Testis (tissue), 5 donors: ENCODE measurements at regions of chr19 and their contacts with region 1.

Region 1: DNA sequence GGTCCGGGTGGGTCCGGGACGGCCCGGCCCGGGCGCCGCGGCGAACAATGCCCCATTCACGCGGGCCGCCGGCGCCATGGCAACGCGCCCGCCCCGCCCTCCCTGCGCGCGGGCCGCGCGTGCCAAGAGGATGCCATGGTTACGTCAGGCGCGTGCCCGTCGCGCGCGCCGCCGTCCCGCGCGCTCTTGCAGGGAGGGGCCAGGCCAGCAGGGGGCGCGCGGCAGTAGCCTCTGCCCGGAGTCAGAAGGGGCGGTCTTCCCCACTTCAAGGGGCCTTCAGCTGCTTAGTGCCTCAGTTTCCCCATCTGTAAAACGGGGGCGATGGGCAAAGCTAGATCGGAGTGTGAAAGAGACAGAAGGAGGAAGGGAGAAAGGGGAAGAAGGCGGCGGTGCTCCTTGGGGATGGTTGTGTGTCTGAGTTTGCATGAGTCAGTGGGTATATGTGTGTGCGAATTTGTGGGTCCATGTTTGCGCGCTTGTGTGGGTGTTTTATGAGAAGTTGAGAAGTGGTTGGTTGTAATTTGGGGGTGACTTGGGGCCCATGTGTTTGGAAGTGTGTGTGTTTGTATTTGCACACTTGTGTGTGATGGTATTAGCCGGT is 11.6 kb upstream of the NFIX start:
- DNase-seq: peak; percentile 89
- H3K4me3 ChIP-seq: peak overlapping the region; percentile 38 to 42
- H3K27ac ChIP-seq: no peak overlapping the region
- H3K4me1 ChIP-seq: no peaks in the 10 kb centered on the region
- H3K27me3 ChIP-seq: no peaks in the 10 kb centered on the region
- CTCF ChIP-seq: peak; percentile 94 to 99 (median 99)
- POLR2A ChIP-seq: no peak

Region 2: DNA sequence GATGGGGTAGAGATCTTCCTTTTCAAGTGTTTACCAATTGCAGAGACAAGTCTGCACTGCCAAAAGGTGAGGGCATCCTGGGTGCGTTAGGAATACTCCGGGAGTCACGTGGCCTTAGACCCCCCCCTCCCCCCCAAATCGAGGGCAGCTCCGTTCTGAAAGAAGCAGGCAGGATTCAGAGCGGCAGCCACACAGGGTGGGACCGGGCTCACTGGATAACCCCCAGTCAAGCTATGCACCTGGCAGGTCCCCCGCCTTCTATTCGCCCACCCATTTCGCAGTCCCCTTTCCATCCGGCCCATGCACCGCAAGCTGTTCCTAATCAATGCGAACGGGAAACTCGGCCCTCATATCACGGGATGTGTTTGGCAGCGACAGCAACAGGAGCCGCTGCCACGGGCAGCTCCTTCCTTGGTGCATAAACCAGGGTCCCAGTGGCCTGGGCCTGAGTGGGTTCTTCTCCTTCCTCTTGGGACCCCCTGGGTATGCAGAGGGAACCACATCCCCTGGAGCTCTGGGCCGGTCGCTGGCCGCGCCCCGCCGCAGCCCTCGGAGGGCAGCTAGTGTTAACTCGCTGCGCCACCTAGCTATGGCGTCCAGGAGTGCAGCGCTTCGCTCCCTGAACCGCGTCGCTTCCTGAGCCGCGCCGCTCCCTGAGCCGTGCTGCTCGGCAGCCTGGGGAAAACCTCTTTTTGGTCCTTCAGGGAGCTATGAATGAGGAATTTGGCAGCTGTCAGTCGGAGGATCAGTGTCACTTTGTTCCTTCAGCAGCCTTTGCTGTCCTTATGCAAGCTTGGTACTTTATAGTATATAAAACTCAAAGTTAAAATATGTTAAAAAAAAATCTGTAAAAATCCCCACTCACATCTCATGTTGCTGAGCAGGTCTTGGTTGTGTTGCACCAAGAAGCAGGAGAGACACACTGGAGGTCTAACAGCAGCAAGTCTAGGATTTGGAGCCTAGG is 77.6 kb after region 1 on chr19:
- intact Hi-C with region 1: loop called (anchors 5 kb)
- DNase-seq: peak; percentile 92
- H3K4me3 ChIP-seq: peak overlapping the region; percentile 15 to 57
- H3K27ac ChIP-seq: peak overlapping the region; percentile 63 to 81
- H3K4me1 ChIP-seq: peaks cover 85% of the 10 kb centered on the region
- H3K27me3 ChIP-seq: no peaks in the 10 kb centered on the region
- CTCF ChIP-seq: peak; percentile 90 to 97 (median 92)
- POLR2A ChIP-seq: no peak

Region 3: GRCh38 chr19:13093407-13094105 is 109.9 kb after region 1 on chr19:
- intact Hi-C with region 1: loop called (anchors 2 kb)
- DNase-seq: peak; percentile 82
- H3K4me3 ChIP-seq: no peak overlapping the region
- H3K27ac ChIP-seq: peak overlapping the region in 1 of 2 donors; percentile 80
- H3K4me1 ChIP-seq: peaks cover 41% of the 10 kb centered on the region
- H3K27me3 ChIP-seq: no peaks in the 10 kb centered on the region
- CTCF ChIP-seq: peak; percentile 96 to 99 (median 97)
- POLR2A ChIP-seq: no peak